Transverse colon (tissue), 4 donors: ENCODE measurements at regions of chr19 and their contacts with region 1.

Region 1: DNA sequence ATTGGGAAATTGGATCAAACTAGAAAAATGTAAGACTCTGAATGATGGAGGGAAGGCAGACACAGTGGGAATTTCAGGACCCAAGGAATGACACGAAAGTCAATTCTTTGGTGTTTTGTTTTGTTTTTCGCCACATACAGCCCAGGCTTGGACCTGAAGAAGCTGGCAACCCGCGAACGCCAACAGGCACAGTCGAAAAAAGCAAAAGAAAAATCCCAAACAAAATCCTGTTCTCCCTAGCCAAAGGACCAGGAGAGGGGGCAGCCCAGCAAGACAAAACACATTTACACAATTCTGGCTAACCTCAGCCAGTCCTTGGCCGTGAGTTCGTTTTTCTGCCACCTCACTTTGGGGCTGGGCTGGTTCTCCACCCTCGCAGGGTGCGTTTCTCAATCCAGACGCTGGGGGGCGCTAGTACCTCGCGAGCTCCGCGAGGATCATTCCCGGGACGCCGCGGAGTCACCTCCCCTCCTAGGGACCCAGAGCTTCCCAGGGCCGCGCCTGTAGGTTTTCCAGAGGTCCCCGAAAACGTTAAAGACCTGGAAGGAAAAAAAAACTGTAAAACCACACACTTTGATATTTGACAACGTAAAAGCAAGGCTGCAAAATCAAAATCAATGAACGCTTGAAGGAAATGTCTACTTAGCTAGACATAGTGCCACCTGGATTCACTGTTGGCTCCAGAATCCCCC is 34.9 kb upstream of the TPM4 start:
- DNase-seq: peak; percentile 90
- H3K4me3 ChIP-seq: peak overlapping the region in 1 of 4 donors; percentile 23
- H3K27ac ChIP-seq: peak overlapping the region in 2 of 4 donors; percentile 30 to 35
- H3K4me1 ChIP-seq: peaks cover 0 to 15% (median 3%) of the 10 kb centered on the region in 4 donors
- H3K27me3 ChIP-seq: no peaks in the 10 kb centered on the region
- CTCF ChIP-seq: peak; percentile 98 to 99 (median 98)
- EP300 ChIP-seq: no peak
- POLR2A ChIP-seq: no peak

Region 2: DNA sequence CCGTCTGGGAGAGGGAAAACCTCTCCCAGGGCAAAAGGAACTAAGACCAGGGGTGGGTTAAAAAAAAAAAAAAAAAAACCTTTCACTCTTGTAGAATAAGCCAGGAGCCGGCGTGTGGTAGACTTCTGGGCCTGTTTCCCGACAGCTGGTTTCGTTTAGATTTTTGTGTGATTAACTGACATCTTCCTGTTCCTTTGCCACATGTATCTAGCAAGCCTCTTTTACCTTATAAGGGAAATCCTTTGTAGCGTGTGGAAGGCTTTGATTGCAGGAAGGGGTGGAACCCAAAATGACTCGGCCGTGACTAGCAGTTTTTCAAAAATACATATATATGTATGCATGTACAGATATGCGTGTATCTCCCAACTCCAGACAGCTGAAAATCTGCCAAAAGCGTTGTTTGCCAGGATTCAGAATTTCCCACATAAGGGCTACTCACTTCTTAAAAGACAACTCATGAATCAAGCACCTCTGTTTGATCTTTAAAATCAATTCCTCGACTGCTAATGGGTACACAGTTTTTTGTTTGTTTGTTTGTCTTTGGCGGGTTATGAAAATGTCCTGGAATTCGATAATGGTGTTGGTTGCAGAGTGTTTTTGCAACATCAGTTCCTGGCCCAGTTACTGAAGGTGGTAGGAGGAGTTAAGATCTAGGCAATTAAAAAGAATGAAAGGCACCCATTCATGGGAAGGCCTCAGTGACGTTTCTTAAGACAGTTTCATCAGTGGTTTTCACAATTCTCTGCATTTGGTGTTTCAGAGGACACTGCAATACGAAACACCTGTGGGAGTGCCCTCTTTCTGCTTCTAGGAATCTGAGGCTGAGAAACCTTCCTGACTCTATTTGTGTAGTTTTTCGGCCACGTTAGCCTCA is 37.6 kb after region 1 on chr19:
- in situ Hi-C with region 1: no loop called
- intact Hi-C with region 1: no loop called
- DNase-seq: peak; percentile 77
- H3K4me3 ChIP-seq: peak overlapping the region; percentile 82 to 100 (median 93)
- H3K27ac ChIP-seq: peak overlapping the region; percentile 99 to 100 (median 100)
- H3K4me1 ChIP-seq: peaks cover 17 to 58% (median 49%) of the 10 kb centered on the region in 4 donors
- H3K27me3 ChIP-seq: no peaks in the 10 kb centered on the region
- CTCF ChIP-seq: no peak
- EP300 ChIP-seq: peak; percentile 34
- POLR2A ChIP-seq: peak; percentile 47

Region 3: DNA sequence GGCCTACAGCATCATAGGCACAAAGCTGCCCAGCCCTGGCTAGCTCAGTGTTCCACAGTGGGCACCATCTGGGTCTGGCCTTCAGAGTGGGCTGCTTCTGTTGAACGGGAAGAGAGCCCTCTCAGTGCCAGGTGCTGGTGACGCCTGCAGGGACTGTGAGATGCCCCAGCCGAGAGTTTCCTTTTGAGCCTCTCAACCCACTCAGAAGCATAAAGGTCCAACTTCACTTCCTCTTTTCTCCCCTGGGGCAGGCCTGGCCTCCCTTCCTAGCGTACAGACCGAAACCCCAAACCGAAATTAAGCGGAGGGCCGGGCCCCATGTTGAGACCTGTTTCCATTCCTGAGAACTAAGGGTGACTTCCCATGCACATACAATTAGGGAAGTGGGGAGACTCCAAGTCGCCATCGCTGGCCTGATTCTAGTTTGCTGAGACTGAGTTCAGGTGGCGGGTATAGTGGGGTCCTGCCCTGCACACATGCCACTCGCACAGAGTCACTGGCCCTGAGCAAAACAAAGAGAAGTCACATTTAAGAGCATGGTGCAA is 77.1 kb after region 1 on chr19:
- in situ Hi-C with region 1: no loop called
- intact Hi-C with region 1: loop called (anchors 5 kb)
- DNase-seq: peak; percentile 76
- H3K4me3 ChIP-seq: no peak overlapping the region
- H3K27ac ChIP-seq: peak overlapping the region; percentile 66 to 85 (median 76)
- H3K4me1 ChIP-seq: peaks cover 15 to 58% (median 30%) of the 10 kb centered on the region in 4 donors
- H3K27me3 ChIP-seq: no peaks in the 10 kb centered on the region
- CTCF ChIP-seq: no peak
- EP300 ChIP-seq: no peak
- POLR2A ChIP-seq: no peak

Region 4: GRCh38 chr19:16175954-16176353 is 134.5 kb after region 1 on chr19:
- in situ Hi-C with region 1: loop called in 3 of 4 experiments (anchors 5 to 10 kb)
- intact Hi-C with region 1: loop called (anchors 5 kb)
- DNase-seq: no peak
- H3K4me3 ChIP-seq: no peak overlapping the region
- H3K27ac ChIP-seq: peak overlapping the region in 1 of 4 donors; percentile 30
- H3K4me1 ChIP-seq: no peaks in the 10 kb centered on the region
- H3K27me3 ChIP-seq: no peaks in the 10 kb centered on the region
- CTCF ChIP-seq: no peak
- EP300 ChIP-seq: no peak
- POLR2A ChIP-seq: no peak